ENCODE measurements at regions of chr2 and their contacts with region 1.

Region 1: GRCh38 chr2:189729430-189729829 is 33.2 kb downstream of the OSGEPL1 start:
- DNase-seq: no peak
- ATAC-seq: no peak
- H3K4me3 ChIP-seq: no peak overlapping the region
- H3K27ac ChIP-seq: no peak overlapping the region
- H3K4me1 ChIP-seq: no peaks in the 10 kb centered on the region
- H3K27me3 ChIP-seq: no peaks in the 10 kb centered on the region
- CTCF ChIP-seq: no peak

Region 2: DNA sequence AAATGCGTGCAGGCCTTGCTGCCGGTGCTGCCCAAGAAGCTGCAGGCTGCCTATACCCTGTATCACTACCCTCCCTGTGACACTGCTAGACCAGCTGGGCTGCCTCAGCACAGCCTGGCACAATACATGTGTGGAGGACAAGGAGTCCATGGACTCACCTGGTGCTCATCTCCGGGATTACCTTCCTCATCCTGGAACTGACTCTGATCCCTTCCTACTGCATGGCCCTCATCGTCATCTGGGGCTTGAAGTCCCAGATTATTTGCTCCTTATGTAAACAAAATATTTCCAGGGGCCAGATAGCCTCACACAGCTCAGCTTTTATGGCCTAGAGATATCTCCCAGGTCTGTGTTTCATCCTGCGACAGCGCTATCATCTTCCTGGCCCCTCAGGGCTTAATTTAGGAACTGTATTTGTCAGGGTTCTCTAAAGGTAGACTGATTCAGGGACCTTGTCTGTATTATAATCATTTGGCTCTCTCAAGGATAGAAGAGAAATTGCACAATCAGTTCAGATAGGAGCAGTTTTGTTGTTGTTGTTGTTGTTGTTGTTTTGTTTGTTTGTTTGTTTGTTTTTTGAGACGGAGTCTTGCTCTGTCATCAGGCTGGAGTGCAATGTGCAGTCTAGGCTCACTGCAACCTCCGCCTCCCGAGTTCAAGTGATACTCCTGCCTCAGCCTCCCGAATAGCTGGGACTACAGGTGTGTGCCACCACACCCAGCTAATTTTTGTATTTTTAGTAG is 245.3 kb before region 1 on chr2:
- CTCF ChIA-PET with region 1: no interaction called
- POLR2A ChIA-PET with region 1: no interaction called
- in situ Hi-C with region 1: no loop called
- intact Hi-C with region 1: no loop called
- DNase-seq: no peak
- ATAC-seq: no peak
- H3K4me3 ChIP-seq: no peak overlapping the region
- H3K27ac ChIP-seq: no peak overlapping the region
- H3K4me1 ChIP-seq: no peaks in the 10 kb centered on the region
- H3K27me3 ChIP-seq: no peaks in the 10 kb centered on the region; the same call in 1 of the 2 replicates
- CTCF ChIP-seq: no peak

Region 3: GRCh38 chr2:189751080-189751658 is 21.7 kb after region 1 on chr2:
- CTCF ChIA-PET with region 1: interaction called, 11 read pairs
- POLR2A ChIA-PET with region 1: no interaction called
- in situ Hi-C with region 1: no loop called
- intact Hi-C with region 1: no loop called
- DNase-seq: no peak
- ATAC-seq: peak; percentile 87
- H3K4me3 ChIP-seq: no peak overlapping the region
- H3K27ac ChIP-seq: no peak overlapping the region
- H3K4me1 ChIP-seq: no peaks in the 10 kb centered on the region
- H3K27me3 ChIP-seq: no peaks in the 10 kb centered on the region
- CTCF ChIP-seq: peak; percentile 81

Region 4: GRCh38 chr2:190075623-190076022 is 346.2 kb after region 1 on chr2:
- CTCF ChIA-PET with region 1: no interaction called
- POLR2A ChIA-PET with region 1: no interaction called
- in situ Hi-C with region 1: no loop called
- intact Hi-C with region 1: no loop called
- DNase-seq: no peak
- ATAC-seq: no peak
- H3K4me3 ChIP-seq: no peak overlapping the region
- H3K27ac ChIP-seq: no peak overlapping the region
- H3K4me1 ChIP-seq: no peaks in the 10 kb centered on the region
- H3K27me3 ChIP-seq: no peaks in the 10 kb centered on the region; the same call in 1 of the 2 replicates
- CTCF ChIP-seq: no peak

Measured in Panc1 (cell line).